MCF 10A (cell line): ENCODE measurements at regions of chr11 and their contacts with region 1.

Region 1: DNA sequence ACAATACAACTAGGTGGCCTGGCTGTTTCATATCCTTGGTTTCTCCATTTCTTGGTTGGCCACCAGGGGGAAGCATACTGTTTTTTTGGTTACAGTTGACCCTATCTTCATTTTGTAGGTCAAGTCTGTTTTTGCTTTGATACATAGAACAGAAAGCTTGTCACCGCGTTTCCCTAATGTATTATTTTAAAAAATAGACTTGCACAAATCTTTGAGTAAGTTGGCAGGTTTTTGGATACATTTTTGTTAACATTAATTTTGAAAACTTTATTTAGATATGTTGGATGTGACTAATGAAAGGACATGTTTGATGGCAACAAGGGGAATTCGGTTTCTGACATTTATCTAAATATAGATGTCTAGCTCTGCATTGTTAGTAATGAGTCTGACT is 3.0 kb downstream of the NCR3LG1 start:
- DNase-seq: peak; percentile 82
- H3K4me3 Mint-ChIP-seq: peak overlapping the region; percentile 75
- H3K27ac Mint-ChIP-seq: peak overlapping the region; percentile 21
- H3K4me1 Mint-ChIP-seq: peaks cover 5% of the 10 kb centered on the region
- H3K27me3 Mint-ChIP-seq: no peaks in the 10 kb centered on the region
- CTCF ChIP-seq: peak; percentile 43

Region 2: DNA sequence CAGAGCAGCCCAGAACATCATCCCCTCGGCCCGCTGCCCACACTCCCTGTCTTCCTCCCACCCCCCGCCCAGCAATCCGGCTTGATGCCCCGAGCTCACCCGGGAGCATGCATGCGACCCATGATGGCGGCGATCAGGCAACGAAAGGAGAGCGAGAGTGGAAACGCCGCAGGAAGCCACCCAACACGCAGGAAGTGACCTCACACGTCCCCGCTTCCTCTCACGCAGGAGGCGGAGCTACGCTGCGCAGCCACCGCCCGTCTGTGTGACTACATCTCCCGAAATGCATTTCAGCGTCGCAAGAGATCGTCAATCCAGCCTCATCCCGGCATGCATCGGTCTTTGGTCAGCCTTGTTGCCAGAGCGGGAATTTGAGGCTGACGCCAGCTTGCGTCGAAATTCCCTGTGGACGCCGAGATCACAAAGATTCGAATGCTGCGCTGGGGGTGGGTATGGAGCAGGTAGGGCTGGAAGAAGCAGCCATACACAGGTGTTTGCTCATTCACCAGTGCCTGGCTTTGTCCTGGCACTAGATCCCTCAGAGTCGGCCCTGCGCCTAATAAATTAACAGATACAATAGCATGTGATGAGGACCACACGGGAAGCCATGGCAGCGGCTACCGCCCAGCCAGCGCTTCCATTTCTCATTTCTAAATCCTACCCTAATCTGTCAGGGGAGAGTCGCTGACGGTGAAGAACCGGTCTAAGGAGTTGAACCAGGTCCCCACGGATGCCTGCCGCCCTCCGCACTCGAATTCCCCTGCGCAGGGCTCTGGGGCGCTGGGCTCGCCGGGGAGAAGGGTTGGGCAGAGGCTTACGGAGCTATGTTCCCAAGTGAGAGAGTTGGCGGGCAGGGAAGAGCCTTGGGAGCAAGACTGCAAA is 276.8 kb before region 1 on chr11 and contains the start of gene RPS13:
- CTCF ChIA-PET with region 1: no interaction called
- POLR2A ChIA-PET with region 1: interaction called, 8 read pairs
- intact Hi-C with region 1: loop called (anchors 5 kb)
- DNase-seq: peak; percentile 99
- H3K4me3 Mint-ChIP-seq: peak within 1 kb of the TSS; percentile 93
- H3K27ac Mint-ChIP-seq: peak within 1 kb of the TSS; percentile 99
- H3K4me1 Mint-ChIP-seq: peaks cover 27% of the 10 kb centered on the region
- H3K27me3 Mint-ChIP-seq: no peaks in the 10 kb centered on the region
- CTCF ChIP-seq: no peak
- total RNA-seq, gene RPS13: 1,551 and 1,734 TPM in 2 replicates

Region 3: DNA sequence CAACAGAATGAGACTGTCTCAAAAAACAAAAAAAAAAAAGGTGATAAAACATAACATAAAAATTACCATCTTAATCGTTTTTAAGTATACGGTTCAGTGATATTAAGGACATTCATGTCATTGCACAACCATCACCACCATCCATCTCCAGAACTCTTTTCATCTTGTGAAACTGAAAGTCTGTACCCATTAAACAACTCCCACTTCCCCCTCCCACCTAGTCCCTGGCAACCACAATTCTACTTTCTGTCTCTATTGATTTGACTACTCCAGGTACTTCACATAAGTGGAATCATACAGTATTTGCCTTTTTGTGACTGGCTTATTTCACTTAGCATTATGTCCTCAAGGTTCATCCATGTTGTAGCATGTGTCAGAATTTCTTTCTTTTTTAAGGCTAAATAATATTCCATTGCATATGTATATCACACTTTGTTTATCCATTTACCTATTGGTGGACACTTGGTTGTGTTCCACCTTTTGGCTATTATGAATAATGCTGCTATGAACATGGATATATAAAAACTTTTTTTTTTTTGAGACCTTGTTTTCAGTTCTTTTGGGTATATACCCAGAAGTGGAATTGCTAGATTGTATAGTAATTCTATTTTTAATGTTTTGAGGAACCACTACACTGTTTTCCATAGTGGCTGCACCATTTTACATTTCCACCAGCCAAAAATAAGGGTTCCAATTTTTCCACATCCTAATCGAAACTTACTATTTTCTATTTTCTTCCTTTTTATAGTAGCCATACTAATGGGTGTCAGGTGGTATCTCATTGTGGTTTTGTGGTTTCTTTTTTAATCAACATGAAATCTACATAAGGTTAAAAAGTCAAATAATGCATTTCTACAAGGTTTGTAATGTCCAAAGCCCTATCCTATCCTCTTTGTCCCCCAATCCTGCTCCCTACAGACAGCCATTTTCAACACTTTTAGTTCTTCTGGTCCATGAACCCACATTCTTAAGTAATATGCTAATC is 123.4 kb before region 1 on chr11:
- CTCF ChIA-PET with region 1: interaction called, 17 read pairs
- POLR2A ChIA-PET with region 1: interaction called, 8 read pairs
- intact Hi-C with region 1: loop called (anchors 1 kb)
- DNase-seq: no peak
- H3K4me3 Mint-ChIP-seq: no peak overlapping the region
- H3K27ac Mint-ChIP-seq: no peak overlapping the region
- H3K4me1 Mint-ChIP-seq: peaks cover 6% of the 10 kb centered on the region
- H3K27me3 Mint-ChIP-seq: no peaks in the 10 kb centered on the region
- CTCF ChIP-seq: no peak

Region 4: GRCh38 chr11:17366495-17366894 is 11.9 kb after region 1 on chr11:
- CTCF ChIA-PET with region 1: interaction called, 34 read pairs
- POLR2A ChIA-PET with region 1: interaction called, 25 read pairs
- intact Hi-C with region 1: no loop called
- DNase-seq: no peak
- H3K4me3 Mint-ChIP-seq: no peak overlapping the region
- H3K27ac Mint-ChIP-seq: no peak overlapping the region
- H3K4me1 Mint-ChIP-seq: no peaks in the 10 kb centered on the region
- H3K27me3 Mint-ChIP-seq: no peaks in the 10 kb centered on the region
- CTCF ChIP-seq: no peak

Region 5: DNA sequence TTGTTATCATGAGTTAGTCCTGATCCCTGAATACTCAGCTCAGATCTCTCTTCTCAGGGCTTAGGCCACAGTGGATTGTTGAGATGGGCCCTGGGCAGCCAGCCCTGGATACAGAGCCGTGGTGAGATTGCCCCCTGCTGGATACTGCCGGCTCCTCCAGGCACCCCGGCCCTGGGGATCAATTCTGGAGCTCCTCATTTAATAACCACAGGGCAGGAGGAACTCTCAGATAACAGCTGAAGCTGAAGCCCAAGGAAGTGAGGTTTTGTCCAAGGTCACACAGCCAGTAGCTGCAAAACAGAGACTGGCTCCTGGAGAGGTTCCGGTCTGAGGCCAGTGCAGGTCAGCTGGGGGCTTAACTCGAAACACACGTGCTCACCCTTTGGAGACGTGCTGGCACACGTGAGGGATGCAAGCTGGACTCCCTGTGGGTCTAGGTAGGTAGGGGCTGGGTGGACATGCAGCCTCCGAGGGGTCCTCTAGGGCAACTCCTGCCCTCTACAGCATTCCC is 173.6 kb after region 1 on chr11:
- CTCF ChIA-PET with region 1: interaction called, 11 read pairs
- POLR2A ChIA-PET with region 1: interaction called, 4 read pairs
- intact Hi-C with region 1: no loop called
- DNase-seq: peak; percentile 54
- H3K4me3 Mint-ChIP-seq: no peak overlapping the region
- H3K27ac Mint-ChIP-seq: no peak overlapping the region
- H3K4me1 Mint-ChIP-seq: no peaks in the 10 kb centered on the region
- H3K27me3 Mint-ChIP-seq: peaks cover 43% of the 10 kb centered on the region
- CTCF ChIP-seq: peak; percentile 70